Heart right ventricle (tissue), 16 donors: ENCODE measurements at regions of chr1 and their contacts with region 1.

Region 1: GRCh38 chr1:150162862-150163706 is 13.4 kb downstream of the PLEKHO1 start:
- DNase-seq: peak; percentile 71 to 90
- ATAC-seq: peak; percentile 88 to 93 (median 91)
- H3K4me3 ChIP-seq: peak overlapping the region in 8 of 10 donors; percentile 13 to 46 (median 30)
- H3K27ac ChIP-seq: peak overlapping the region; percentile 76 to 96 (median 90)
- H3K4me1 ChIP-seq: peaks cover 10 to 78% (median 37%) of the 10 kb centered on the region in 9 donors
- H3K27me3 ChIP-seq: no peaks in the 10 kb centered on the region
- CTCF ChIP-seq: peak in 1 of 9 donors; percentile 5

Region 2: GRCh38 chr1:150083907-150084306 is 79.2 kb before region 1 on chr1:
- intact Hi-C with region 1: loop called in 3 of 10 experiments (anchors 5 kb)
- DNase-seq: no peak
- ATAC-seq: no peak
- H3K4me3 ChIP-seq: no peak overlapping the region
- H3K27ac ChIP-seq: peak overlapping the region in 1 of 10 donors; percentile 11
- H3K4me1 ChIP-seq: peaks cover 0 to 13% (median 4%) of the 10 kb centered on the region in 9 donors
- H3K27me3 ChIP-seq: no peaks in the 10 kb centered on the region
- CTCF ChIP-seq: no peak

Region 3: DNA sequence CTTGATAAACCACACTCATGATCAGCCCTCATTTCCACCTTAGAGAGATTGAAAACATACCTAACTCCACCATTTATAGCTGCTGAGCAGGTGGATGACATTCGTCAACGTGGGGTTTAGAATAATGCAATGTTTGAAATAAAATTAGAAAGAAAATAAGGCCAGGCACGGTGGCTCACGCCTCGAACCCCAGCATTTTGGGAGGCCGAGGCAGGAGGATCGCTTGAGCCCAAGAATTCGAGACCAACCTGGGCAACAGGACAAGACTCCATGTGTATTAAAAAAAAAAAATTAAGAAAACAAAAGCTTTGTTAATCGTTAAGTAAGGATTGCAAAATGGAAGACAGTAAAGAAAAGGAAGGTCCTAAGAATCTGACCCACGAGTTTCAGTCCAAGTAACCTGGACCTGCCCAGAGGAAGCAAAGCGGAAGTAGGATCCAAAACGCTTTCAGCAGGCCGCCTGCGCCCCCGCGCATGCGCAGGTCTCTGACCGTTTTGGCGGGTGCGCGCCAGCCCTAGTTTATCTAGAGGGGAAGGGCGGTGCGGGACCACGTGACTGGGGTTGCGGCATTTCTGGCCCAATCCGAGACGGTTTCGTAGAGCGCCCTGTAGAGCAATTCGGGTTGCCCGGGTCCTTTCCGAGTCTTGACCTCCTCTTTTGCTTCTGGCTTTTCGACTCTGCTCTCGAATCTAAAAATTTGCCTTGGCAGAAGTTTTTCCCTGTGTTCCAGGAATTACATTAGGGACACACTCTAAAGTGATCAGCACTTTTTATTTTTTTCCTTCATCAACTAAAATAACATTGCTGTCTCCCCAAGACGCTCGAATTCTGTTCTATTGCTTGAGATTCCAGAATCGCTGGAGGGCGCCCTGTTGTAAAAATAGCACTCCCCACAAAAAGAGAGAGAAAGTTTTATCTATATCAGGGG is 50.4 kb after region 1 on chr1:
- intact Hi-C with region 1: no loop called
- DNase-seq: peak; percentile 94 to 96
- ATAC-seq: peak; percentile 98 to 100 (median 100)
- H3K4me3 ChIP-seq: peak overlapping the region in 9 of 10 donors; percentile 31 to 56 (median 47)
- H3K27ac ChIP-seq: peak overlapping the region; percentile 26 to 92 (median 83)
- H3K4me1 ChIP-seq: peaks cover 0 to 13% (median 9%) of the 10 kb centered on the region in 9 donors
- H3K27me3 ChIP-seq: no peaks in the 10 kb centered on the region
- CTCF ChIP-seq: peak in 6 of 9 donors; percentile 15 to 58 (median 44)